ENCODE measurements at regions of chr13 and their contacts with region 1.

Region 1: DNA sequence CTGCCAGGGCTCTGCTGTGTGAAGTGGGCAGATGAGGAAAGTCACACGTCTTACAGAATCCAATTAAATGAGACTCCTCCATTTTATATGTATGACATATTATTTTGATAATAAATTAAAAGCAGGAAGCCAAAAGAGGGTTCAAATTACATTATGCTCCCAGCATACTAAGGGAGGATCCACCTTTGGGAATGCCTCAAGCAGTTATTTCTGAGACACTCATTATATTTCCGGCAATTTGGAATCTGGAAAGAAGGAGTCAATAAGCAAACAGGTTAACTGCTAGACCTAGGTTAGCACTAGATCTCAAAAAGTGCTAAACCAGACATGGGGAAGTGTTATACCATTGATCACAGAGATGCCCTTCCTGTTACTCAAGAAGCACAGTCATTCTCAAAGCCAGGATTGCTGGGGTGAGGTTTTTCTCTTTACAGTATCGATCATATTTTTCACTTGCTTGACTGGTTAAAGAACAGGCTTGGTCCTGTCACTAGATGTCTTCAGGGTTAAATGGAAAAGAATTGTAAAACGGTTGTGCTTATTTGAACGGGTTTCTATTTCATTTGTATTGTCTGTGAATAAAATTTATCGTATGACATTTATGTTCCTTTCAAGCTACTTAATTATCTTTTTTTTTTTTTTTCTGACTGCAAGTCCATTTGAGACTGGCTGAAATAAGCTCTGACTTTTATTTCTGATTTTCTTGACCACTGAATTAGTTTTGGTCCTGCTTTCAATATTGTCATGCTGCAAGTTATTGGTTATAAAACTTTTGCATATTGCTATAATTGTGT is 523.2 kb downstream of the KLF12 start:
- DNase-seq: no peak
- ATAC-seq: no peak
- H3K4me3 ChIP-seq: no peak overlapping the region
- H3K27ac ChIP-seq: no peak overlapping the region
- H3K4me1 ChIP-seq: no peaks in the 10 kb centered on the region
- H3K27me3 ChIP-seq: no peaks in the 10 kb centered on the region; the same call in 1 of the 2 replicates
- CTCF ChIP-seq: no peak
- POLR2A ChIP-seq: no peak
- RAD21 ChIP-seq: no peak

Region 2: DNA sequence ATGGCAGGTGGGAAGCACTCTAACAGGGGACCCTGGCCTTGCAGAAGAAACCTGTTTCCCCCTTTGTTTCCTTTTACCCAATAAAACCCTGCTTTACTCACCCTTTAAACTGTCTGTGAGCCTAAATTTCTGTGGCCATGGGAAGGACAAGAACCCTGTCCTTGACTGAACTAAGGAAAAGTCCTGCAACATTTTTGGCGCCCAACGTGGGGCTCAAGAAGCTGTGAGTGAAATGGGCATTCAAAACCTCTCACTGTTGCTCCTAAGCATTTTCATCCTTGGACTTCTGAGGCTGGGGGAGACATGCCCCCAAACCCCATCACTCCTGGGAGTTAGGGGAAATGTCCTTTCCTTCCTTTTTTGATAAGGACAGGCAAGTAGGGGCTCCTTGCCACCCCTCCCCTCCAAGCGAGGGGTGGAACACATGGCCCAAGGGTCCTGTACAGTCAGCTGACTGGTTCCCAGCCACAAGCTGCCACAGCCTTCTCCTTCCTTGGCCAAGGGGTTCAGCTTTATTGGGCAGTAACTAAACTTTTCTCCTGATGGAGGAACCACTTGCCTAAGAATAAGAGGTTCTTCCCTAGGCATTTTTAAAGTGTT is 170.6 kb before region 1 on chr13:
- CTCF ChIA-PET with region 1: no interaction called
- POLR2A ChIA-PET with region 1: no interaction called
- dilution Hi-C with region 1: no loop called
- in situ Hi-C with region 1: no loop called
- intact Hi-C with region 1: no loop called
- DNase-seq: no peak
- ATAC-seq: no peak
- H3K4me3 ChIP-seq: no peak overlapping the region
- H3K27ac ChIP-seq: no peak overlapping the region
- H3K4me1 ChIP-seq: no peaks in the 10 kb centered on the region
- H3K27me3 ChIP-seq: no peaks in the 10 kb centered on the region
- CTCF ChIP-seq: no peak
- POLR2A ChIP-seq: no peak
- RAD21 ChIP-seq: no peak

Region 3: GRCh38 chr13:73505376-73505890 is 105.6 kb before region 1 on chr13:
- CTCF ChIA-PET with region 1: no interaction called
- POLR2A ChIA-PET with region 1: no interaction called
- dilution Hi-C with region 1: no loop called
- in situ Hi-C with region 1: no loop called
- intact Hi-C with region 1: no loop called
- DNase-seq: no peak
- ATAC-seq: no peak
- H3K4me3 ChIP-seq: no peak overlapping the region
- H3K27ac ChIP-seq: no peak overlapping the region
- H3K4me1 ChIP-seq: no peaks in the 10 kb centered on the region
- H3K27me3 ChIP-seq: peaks cover 3% of the 10 kb centered on the region; the same call in 1 of the 2 replicates
- CTCF ChIP-seq: no peak
- POLR2A ChIP-seq: no peak
- RAD21 ChIP-seq: no peak

Region 4: GRCh38 chr13:73572824-73573223 is 38.2 kb before region 1 on chr13:
- CTCF ChIA-PET with region 1: no interaction called
- POLR2A ChIA-PET with region 1: no interaction called
- dilution Hi-C with region 1: no loop called
- in situ Hi-C with region 1: no loop called
- intact Hi-C with region 1: loop called (anchors 1 kb)
- DNase-seq: no peak
- ATAC-seq: no peak
- H3K4me3 ChIP-seq: no peak overlapping the region
- H3K27ac ChIP-seq: no peak overlapping the region
- H3K4me1 ChIP-seq: no peaks in the 10 kb centered on the region
- H3K27me3 ChIP-seq: no peaks in the 10 kb centered on the region
- CTCF ChIP-seq: no peak
- POLR2A ChIP-seq: no peak
- RAD21 ChIP-seq: no peak